ENCODE measurements at regions of chr3 and their contacts with region 1.

Region 1: DNA sequence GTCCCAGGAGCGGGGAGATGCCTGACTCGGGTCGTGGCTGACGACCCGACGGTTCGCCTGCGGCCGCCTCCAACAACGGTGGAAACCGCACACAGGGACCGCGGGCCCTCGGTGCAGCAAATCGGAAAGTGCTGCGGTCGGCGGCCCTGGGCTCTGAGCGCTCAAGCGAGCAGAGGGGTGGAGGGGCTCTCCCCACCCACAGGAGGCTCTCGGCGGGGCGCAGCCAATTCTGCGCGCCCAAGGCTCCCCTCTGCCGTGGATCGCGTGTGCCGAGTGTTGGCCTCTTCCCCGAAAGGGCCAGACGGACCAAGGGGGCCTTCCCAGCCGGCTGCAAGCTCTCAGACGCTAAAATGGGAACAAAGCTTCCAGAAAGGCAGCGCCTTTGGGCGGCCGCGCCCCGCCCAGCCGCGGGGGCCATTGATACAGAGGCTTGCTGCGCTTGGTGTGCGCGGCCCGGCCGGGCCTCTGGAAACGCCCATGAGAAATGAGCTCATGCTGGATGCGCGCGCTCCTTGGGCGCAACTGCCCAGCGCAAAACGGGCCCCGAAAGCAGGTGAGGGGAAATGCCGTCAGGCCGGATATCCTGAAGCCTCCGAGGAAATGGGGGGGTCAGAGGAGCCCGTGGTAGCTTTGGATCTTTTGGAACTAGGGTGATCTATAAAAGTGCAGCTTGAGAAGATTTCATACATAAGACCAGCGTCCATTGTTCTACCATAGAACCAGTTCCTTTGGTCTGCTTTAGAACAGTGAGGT is 1.2 kb upstream of the GSK3B start:
- DNase-seq: peak; percentile 61
- H3K27ac ChIP-seq: peak overlapping the region; percentile 100
- CTCF ChIP-seq: no peak

Region 2: GRCh38 chr3:120033596-120033995 is 61.8 kb before region 1 on chr3:
- CTCF ChIA-PET with region 1: no interaction called
- POLR2A ChIA-PET with region 1: no interaction called
- DNase-seq: no peak
- H3K27ac ChIP-seq: no peak overlapping the region
- CTCF ChIP-seq: no peak

Region 3: GRCh38 chr3:120147072-120147871 is 51.9 kb after region 1 on chr3:
- CTCF ChIA-PET with region 1: interaction called, 3 read pairs
- POLR2A ChIA-PET with region 1: interaction called, 23 read pairs
- DNase-seq: peak; percentile 53
- H3K27ac ChIP-seq: peak overlapping the region; percentile 99; the same call in 1 of the 2 replicates
- CTCF ChIP-seq: no peak